ENCODE measurements at regions of chr16 and their contacts with region 1.

Region 1: DNA sequence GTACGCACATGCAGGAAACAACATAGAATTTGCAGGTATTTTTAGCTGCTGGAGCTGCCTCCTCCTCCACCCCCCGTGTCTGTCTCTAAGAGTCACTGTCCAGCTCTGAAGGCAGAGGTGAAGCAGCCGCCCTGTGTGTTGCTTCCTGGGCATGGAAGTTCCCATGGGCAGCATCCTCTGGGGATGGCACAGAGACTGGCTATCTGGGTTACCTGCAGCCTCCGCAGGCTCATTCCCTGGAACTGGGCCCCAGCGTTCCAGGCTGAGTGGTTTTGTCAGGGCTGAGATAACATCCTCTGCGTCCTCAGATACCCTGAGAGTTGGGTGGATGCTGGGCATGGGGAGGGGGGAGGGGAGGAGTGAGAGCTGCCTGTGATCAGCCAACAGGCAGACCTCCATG is 41.5 kb upstream of the MRTFB start:
- DNase-seq: no peak

Region 2: DNA sequence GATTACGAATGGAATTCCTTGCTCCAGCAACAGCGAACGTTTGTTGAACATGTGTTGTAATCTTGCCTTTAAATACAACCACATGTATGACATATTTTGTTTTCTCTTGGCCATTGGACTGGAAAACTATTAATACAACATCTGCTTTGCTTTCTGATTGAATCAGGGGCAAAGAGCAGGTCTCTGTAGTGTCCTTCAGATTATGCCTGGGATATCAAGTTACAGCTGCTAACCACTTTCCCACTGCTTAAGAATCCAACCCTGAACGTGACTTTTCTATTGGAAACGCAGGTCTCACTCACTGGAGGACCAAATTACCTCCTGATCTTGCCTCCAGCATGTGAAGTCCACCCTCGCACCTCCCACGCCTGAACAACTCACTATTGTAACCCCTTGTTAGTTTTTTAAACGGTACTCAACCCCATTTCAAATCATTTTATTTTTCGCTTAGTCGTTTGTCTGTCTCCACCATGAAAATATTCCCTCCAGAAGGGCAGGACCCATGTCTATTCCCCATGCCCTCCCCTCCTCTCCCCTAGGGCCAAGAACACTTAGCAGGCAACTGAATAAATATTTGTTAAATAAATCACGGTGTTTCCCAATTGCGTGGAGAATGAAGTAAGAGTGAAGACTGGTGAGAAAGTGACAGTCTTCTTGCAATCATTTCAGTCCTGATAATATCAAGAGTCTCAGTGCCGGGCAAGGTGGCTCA is 15.9 kb before region 1 on chr16:
- intact Hi-C with region 1: loop called in 1 of 2 experiments (anchors 1 kb)
- DNase-seq: no peak

Region 3: GRCh38 chr16:14077918-14078317 is 48.3 kb after region 1 on chr16:
- intact Hi-C with region 1: no loop called
- DNase-seq: no peak

Region 4: GRCh38 chr16:14097182-14097959 is 67.7 kb after region 1 on chr16:
- intact Hi-C with region 1: no loop called
- DNase-seq: no peak